Heart left ventricle (tissue), 16 donors: ENCODE measurements at regions of chr1 and their contacts with region 1.

Region 1: GRCh38 chr1:211382714-211383480 is 56.3 kb downstream of the TRAF5 start:
- DNase-seq: peak; percentile 95 to 98 (median 96)
- ATAC-seq: peak; percentile 100
- H3K4me3 ChIP-seq: peak overlapping the region; percentile 56 to 89 (median 77)
- H3K27ac ChIP-seq: peak overlapping the region; percentile 73 to 98 (median 94)
- H3K4me1 ChIP-seq: peaks cover 0 to 23% (median 5%) of the 10 kb centered on the region in 12 donors
- H3K27me3 ChIP-seq: no peaks in the 10 kb centered on the region
- CTCF ChIP-seq: no peak
- POLR2A ChIP-seq: peak; percentile 66 to 93

Region 2: DNA sequence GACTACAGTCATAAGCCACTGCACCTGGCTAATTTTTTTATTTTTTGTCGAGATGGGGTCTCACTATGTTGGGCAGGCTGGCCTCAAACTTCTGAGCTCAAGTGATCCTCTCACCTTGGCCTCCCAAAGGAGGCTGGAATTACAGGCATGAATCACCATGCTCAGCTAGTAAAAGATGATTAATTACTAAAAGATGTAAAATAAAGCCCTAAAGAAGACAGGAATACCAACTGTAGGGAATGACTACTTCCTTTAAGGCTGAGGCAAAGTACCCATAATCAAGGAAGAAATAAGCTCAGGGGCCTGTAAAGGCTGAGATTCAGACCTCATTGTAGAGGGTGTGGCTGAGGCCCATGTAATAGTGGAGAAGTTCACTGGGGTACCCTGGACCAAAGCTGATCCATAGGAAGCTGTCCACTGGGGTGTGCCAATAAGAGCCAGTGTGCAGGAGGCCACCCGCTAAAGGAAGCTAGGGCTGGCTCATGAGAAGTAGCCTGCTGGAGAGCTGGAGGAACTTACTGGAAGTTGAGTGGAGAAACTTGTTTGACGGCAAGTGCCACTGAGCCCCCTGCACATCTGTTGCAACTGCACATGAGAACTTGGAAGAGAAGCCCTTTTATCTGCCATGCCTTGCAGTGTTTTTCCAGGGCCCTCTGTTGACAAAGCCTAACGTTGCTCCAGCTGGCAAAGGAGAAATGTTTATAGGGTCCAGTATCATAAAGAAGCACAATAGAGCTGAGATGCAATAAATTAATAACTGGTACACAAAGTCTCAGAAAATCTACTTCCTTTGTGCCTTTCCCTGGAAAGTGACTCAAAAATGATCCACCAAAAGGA is 1168.1 kb before region 1 on chr1:
- intact Hi-C with region 1: no loop called
- DNase-seq: no peak
- ATAC-seq: no peak
- H3K4me3 ChIP-seq: no peak overlapping the region
- H3K27ac ChIP-seq: no peak overlapping the region
- H3K4me1 ChIP-seq: no peaks in the 10 kb centered on the region
- H3K27me3 ChIP-seq: no peaks in the 10 kb centered on the region
- CTCF ChIP-seq: no peak
- POLR2A ChIP-seq: no peak

Region 3: DNA sequence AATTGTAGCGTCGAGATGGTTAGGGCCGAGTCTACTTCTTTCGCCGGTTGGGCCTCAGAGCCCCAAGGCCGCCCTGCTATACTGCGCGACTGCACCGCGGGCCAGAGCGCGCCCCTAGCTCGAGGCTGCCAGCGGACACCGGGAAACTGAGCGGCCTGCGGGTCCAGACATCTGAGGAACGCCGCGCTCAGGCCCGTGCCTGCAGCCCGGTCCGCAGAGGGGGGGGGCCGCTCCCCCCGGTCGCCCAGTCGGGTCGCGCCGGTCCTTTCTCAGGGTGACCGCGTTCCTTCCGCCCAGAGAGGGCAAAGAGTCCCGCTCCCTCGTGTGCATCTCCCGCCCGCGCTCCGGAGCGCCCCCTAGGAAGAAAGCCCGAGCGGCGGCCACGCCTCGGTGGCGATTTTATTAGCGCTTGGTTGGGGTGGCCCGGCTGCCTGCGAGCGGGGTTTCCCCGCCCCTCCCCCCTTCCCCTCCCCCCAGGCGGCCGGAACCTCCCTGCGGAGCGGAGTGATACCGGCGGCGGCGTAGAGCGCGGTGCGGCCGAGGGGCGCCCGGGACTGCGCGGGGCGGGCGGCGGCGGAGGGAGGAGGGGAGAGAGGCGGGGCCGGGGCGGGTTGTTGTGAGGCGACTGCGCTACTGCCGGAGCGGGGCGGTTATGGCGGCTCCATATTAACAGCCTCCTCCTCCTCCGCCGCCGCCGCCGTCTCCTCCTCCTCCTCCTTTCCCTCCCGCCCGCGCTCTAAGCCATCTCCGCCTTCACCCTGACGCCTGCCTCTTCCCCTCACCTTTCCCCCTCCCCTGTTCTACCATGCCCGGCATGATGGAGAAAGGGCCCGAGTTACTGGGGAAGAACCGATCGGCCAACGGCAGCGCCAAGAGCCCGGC is 123.9 kb before region 1 on chr1 and contains the start of gene RCOR3:
- intact Hi-C with region 1: loop called in 2 of 10 experiments (anchors 2 to 10 kb)
- DNase-seq: peak; percentile 96 to 98 (median 97)
- ATAC-seq: peak; percentile 83 to 94 (median 89)
- H3K4me3 ChIP-seq: peak within 1 kb of the TSS; percentile 70 to 98 (median 93)
- H3K27ac ChIP-seq: peak within 1 kb of the TSS; percentile 92 to 100 (median 98)
- H3K4me1 ChIP-seq: peaks cover 0 to 28% (median 16%) of the 10 kb centered on the region in 12 donors
- H3K27me3 ChIP-seq: no peaks in the 10 kb centered on the region
- CTCF ChIP-seq: peak; percentile 51 to 74 (median 62)
- POLR2A ChIP-seq: peak in 1 of 2 donors; percentile 69
- total RNA-seq, gene RCOR3: 28.9 to 60.1 (median 48.6) TPM

Region 4: DNA sequence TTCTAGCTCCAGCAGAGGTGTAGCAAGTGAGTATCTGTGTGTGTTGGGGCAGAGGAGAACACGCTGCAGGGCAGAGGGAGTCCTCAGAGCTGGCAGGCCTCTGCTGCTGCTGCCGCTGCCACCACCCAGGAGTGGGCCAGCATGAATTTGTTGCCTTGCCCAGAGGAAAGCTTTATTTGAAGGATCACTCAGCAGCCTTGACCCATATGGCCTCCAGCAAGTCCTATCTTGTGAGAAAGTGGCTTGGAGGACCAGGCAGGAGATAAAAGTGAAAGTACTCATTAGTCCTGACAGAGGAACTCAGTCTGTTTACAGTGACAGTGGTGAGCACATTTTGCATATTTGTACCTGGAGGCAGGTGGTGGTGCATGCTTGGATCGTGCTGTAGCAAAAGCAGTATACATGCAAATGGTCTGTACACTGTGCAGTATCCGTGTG is 53.1 kb before region 1 on chr1:
- intact Hi-C with region 1: loop called in 4 of 10 experiments (anchors 5 to 10 kb)
- DNase-seq: no peak
- ATAC-seq: no peak
- H3K4me3 ChIP-seq: peak overlapping the region in 1 of 12 donors; percentile 12
- H3K27ac ChIP-seq: peak overlapping the region in 1 of 12 donors; percentile 82
- H3K4me1 ChIP-seq: peaks cover 0 to 70% (median 15%) of the 10 kb centered on the region in 12 donors
- H3K27me3 ChIP-seq: no peaks in the 10 kb centered on the region
- CTCF ChIP-seq: no peak
- POLR2A ChIP-seq: no peak